GM12878 (cell line): ENCODE measurements at regions of chr14 and their contacts with region 1.

Region 1: GRCh38 chr14:50619556-50620141 is 48.5 kb downstream of the SAV1 start:
- DNase-seq: peak; percentile 21
- ATAC-seq: peak; percentile 92
- H3K4me3 ChIP-seq: no peak overlapping the region
- H3K27ac ChIP-seq: no peak overlapping the region
- H3K4me1 ChIP-seq: no peaks in the 10 kb centered on the region
- H3K27me3 ChIP-seq: no peaks in the 10 kb centered on the region
- CTCF ChIP-seq: peak; percentile 69 to 80 (median 76)
- EP300 ChIP-seq: no peak
- POLR2A ChIP-seq: no peak
- RAD21 ChIP-seq: peak; percentile 83

Region 2: GRCh38 chr14:50599700-50600444 is 19.8 kb before region 1 on chr14:
- CTCF ChIA-PET with region 1: interaction called, 26 read pairs
- POLR2A ChIA-PET with region 1: interaction called, 4 read pairs
- RAD21 ChIA-PET with region 1: interaction called, 8 read pairs
- SMC1A ChIA-PET with region 1: interaction called, 15 read pairs
- in situ Hi-C with region 1: no loop called
- intact Hi-C with region 1: no loop called
- DNase-seq: no peak
- ATAC-seq: peak; percentile 76
- H3K4me3 ChIP-seq: no peak overlapping the region
- H3K27ac ChIP-seq: no peak overlapping the region
- H3K4me1 ChIP-seq: no peaks in the 10 kb centered on the region
- H3K27me3 ChIP-seq: no peaks in the 10 kb centered on the region
- CTCF ChIP-seq: peak; percentile 49 to 67 (median 55); a peak in 5 of 6 replicates
- EP300 ChIP-seq: no peak
- POLR2A ChIP-seq: no peak
- RAD21 ChIP-seq: peak; percentile 79

Region 3: DNA sequence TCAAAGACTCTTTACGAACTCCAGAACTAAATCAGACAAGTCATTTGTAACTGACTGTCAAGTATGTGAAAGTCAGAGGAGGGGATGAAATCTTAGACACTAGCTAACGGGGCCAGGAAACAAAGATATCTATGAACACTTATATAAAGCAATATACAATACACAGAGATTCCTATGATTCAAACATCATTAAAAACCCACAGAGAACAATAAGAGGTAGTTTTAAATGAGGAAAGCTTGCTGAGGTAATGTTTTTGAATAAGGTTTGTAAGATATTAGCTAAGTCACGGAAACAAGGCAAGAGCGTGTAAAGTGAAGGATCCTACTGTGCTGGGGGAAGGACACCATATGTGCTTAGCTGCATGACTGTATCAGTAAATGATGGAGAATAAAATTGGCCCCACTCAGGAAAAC is 11.8 kb after region 1 on chr14:
- CTCF ChIA-PET with region 1: interaction called, 22 read pairs
- POLR2A ChIA-PET with region 1: no interaction called
- RAD21 ChIA-PET with region 1: interaction called, 5 read pairs
- SMC1A ChIA-PET with region 1: interaction called, 21 read pairs
- in situ Hi-C with region 1: no loop called
- intact Hi-C with region 1: no loop called
- DNase-seq: no peak
- ATAC-seq: no peak
- H3K4me3 ChIP-seq: no peak overlapping the region
- H3K27ac ChIP-seq: no peak overlapping the region
- H3K4me1 ChIP-seq: no peaks in the 10 kb centered on the region
- H3K27me3 ChIP-seq: no peaks in the 10 kb centered on the region
- CTCF ChIP-seq: no peak
- EP300 ChIP-seq: no peak
- POLR2A ChIP-seq: no peak
- RAD21 ChIP-seq: no peak

Region 4: DNA sequence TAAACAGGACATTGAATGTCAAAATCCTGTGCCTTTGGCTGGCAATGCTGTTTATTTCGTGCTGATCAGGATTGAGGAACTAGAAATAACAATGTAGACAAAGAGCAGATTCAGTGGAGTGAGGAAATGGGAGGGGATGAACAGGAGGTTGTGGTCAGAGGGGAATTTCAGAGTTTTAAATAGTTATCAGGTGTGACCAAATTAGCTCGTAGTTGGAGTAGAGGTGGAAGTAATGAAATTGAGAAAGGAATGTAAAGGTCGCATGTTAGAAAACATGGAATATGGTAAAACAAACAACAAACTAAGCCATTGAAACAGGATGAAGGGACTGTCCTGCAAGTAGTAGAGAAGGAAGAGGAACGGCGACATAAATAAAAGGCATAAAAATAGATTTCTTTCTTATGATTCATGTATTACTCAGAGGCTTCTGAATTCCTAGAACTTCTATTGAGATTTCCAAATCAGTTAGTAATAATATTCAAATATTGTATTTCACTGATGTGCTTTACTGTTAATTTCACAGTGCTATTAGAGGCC is 57.9 kb after region 1 on chr14:
- CTCF ChIA-PET with region 1: interaction called, 4 read pairs
- POLR2A ChIA-PET with region 1: interaction called, 5 read pairs
- RAD21 ChIA-PET with region 1: interaction called, 3 read pairs
- SMC1A ChIA-PET with region 1: interaction called, 10 read pairs
- in situ Hi-C with region 1: no loop called
- intact Hi-C with region 1: no loop called
- DNase-seq: peak; percentile 61
- ATAC-seq: peak; percentile 92
- H3K4me3 ChIP-seq: peak overlapping the region; percentile 35; the same call in 1 of the 2 replicates
- H3K27ac ChIP-seq: peak overlapping the region; percentile 61
- H3K4me1 ChIP-seq: peaks cover 20% of the 10 kb centered on the region
- H3K27me3 ChIP-seq: no peaks in the 10 kb centered on the region
- CTCF ChIP-seq: no peak
- EP300 ChIP-seq: peak; percentile 46 to 81; a peak in 2 of 4 replicates
- POLR2A ChIP-seq: no peak
- RAD21 ChIP-seq: no peak

Region 5: DNA sequence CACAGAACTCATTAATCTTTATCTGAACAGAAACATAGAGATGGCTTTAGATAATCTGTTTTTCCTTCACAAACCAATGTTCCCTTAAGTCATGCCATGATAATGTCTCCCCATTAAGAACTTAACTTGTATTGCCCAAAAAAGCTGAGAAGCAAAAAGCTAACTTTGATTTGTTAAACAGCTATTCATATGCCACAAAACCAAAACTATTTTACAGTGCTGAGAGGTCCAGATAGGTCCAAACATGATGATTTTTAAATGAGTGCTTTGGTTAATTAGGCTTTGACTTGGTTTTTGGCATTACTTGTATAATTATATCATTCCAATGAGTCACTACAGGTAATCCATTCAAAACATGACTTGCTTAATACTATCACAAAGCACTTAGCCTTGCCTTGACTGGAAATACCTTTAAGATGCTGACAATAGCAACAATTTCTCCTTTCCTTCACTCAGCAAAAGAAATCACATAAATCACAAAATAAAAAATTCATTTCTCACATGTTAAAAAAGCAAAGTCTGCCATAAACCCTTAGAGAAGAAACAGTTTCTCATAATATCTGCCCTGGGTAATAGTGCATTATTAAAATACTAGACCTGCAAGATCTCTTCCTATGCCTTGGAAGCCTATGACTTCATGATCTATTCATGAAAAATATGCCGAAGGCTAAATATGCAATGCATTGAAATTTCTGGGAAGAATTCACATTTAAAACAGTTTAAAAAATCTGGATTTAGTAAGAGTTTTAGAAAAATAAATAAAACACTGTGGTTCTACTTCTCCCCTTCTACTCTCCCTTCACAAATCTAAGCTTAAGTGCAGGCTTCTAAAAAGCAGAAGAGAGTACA is 100.5 kb after region 1 on chr14:
- CTCF ChIA-PET with region 1: interaction called, 50 read pairs
- POLR2A ChIA-PET with region 1: no interaction called
- RAD21 ChIA-PET with region 1: interaction called, 36 read pairs
- SMC1A ChIA-PET with region 1: interaction called, 27 read pairs
- in situ Hi-C with region 1: no loop called
- intact Hi-C with region 1: no loop called
- DNase-seq: no peak
- ATAC-seq: no peak
- H3K4me3 ChIP-seq: no peak overlapping the region
- H3K27ac ChIP-seq: no peak overlapping the region
- H3K4me1 ChIP-seq: no peaks in the 10 kb centered on the region
- H3K27me3 ChIP-seq: no peaks in the 10 kb centered on the region
- CTCF ChIP-seq: no peak
- EP300 ChIP-seq: no peak
- POLR2A ChIP-seq: no peak
- RAD21 ChIP-seq: no peak

Region 6: DNA sequence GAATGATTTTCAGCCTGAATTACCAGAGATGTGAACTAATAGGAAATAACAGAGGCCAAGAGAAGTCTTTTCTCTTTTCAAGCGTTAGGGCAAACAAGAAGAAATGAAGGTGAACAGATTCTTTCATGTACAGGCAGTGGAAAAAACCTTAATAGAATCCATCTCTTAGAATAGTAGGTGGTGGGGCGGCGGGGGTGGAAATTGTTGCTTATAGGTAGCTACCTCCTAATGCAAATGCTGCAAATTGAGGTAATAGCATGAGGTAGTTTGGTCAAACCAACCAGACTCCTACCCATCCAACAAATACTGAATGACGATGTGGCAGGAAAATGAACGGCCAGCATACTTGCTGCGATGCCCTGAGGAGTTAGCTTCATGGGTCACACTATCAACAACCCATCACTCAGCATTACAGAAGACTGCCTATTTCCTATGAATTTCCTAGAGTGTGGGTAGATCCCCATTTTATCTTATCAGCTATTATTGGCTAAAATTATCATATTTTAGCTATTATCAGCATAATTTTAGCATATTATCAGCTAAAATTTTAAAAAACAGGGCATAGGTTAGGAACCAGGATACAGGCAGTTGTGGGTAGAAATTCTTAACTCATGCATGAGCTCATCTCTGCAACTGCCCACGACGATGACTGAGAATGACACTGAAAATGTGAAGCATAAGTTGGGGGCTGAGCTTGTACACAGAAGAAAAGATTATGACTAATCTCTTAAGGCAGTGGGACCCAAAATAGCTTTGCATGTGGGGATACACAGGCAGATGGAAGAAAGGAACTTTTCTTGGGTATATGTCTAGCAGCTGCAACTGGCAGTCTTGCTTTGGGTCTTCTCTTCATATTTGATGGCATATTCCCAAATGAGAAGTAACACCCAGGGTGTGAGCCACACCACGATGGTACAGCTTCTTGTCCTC is 142.6 kb after region 1 on chr14:
- CTCF ChIA-PET with region 1: interaction called, 12 read pairs
- POLR2A ChIA-PET with region 1: interaction called, 4 read pairs
- RAD21 ChIA-PET with region 1: interaction called, 13 read pairs
- SMC1A ChIA-PET with region 1: interaction called, 18 read pairs
- in situ Hi-C with region 1: no loop called
- intact Hi-C with region 1: no loop called
- DNase-seq: no peak
- ATAC-seq: peak; percentile 88
- H3K4me3 ChIP-seq: no peak overlapping the region
- H3K27ac ChIP-seq: peak overlapping the region; percentile 65
- H3K4me1 ChIP-seq: peaks cover 15% of the 10 kb centered on the region; the same call in 1 of the 2 replicates
- H3K27me3 ChIP-seq: no peaks in the 10 kb centered on the region
- CTCF ChIP-seq: no peak
- EP300 ChIP-seq: peak; percentile 12 to 22; a peak in 1 of 4 replicates
- POLR2A ChIP-seq: no peak
- RAD21 ChIP-seq: no peak